Activated T-helper 2 cell treated with anti-CD3 and anti-CD28 coated beads, Interferon-gamma antibody, Interleukin-2, Interleukin-4, amounts not matched to agents 10 μg/mL and 5 μg/mL and 100 μg/mL, durations not matched to agents 14 hours and 24 hours and 36 hours (primary cell): ENCODE measurements at regions of chr15 and their contacts with region 1.

Region 1: GRCh38 chr15:85412956-85413854 is 32.8 kb downstream of the AKAP13 start:
- DNase-seq: peak; percentile 71
- H3K4me3 Mint-ChIP-seq: peak overlapping the region; percentile 55
- H3K27ac Mint-ChIP-seq: peak overlapping the region; percentile 87
- H3K4me1 Mint-ChIP-seq: peaks cover 64% of the 10 kb centered on the region
- H3K27me3 Mint-ChIP-seq: no peaks in the 10 kb centered on the region

Region 2: GRCh38 chr15:85296615-85297402 is 116.4 kb before region 1 on chr15:
- intact Hi-C with region 1: loop called (anchors 1 kb)
- DNase-seq: peak; percentile 65
- H3K4me3 Mint-ChIP-seq: peak overlapping the region; percentile 28
- H3K27ac Mint-ChIP-seq: peak overlapping the region; percentile 8
- H3K4me1 Mint-ChIP-seq: peaks cover 19% of the 10 kb centered on the region
- H3K27me3 Mint-ChIP-seq: peaks cover 7% of the 10 kb centered on the region

Region 3: GRCh38 chr15:85318048-85318731 is 95.0 kb before region 1 on chr15:
- intact Hi-C with region 1: loop called (anchors 1 kb)
- DNase-seq: peak; percentile 55
- H3K4me3 Mint-ChIP-seq: peak overlapping the region; percentile 41
- H3K27ac Mint-ChIP-seq: peak overlapping the region; percentile 91
- H3K4me1 Mint-ChIP-seq: peaks cover 66% of the 10 kb centered on the region
- H3K27me3 Mint-ChIP-seq: no peaks in the 10 kb centered on the region

Region 4: DNA sequence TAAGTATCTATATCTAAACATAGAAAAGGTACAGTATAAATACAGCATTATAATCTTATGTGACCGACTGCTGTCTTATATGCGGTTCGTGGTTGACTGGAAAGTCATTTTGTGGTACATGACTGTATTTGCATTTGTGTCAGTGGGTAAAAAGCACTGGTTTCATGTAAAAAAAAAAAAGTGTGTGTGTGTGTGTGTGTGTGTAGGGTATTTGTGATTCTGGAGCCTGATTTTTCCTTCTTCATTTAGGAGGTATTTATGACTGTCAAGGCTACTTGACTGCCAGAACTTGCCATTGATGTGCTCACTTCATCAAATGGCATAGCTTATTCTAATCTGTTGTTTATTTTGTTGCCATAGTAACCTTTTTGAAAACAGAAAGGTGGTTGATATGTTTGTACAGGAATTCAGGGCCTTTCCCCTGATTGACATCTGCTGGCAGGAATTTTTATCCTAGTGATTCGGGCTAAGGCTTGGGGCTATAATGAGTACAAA is 30.4 kb after region 1 on chr15:
- intact Hi-C with region 1: loop called (anchors 2 kb)
- DNase-seq: no peak
- H3K4me3 Mint-ChIP-seq: no peak overlapping the region
- H3K27ac Mint-ChIP-seq: peak overlapping the region; percentile 66
- H3K4me1 Mint-ChIP-seq: peaks cover 41% of the 10 kb centered on the region
- H3K27me3 Mint-ChIP-seq: no peaks in the 10 kb centered on the region

Region 5: GRCh38 chr15:85485956-85486567 is 72.9 kb after region 1 on chr15:
- intact Hi-C with region 1: no loop called
- DNase-seq: peak; percentile 40
- H3K4me3 Mint-ChIP-seq: no peak overlapping the region
- H3K27ac Mint-ChIP-seq: no peak overlapping the region
- H3K4me1 Mint-ChIP-seq: peaks cover 60% of the 10 kb centered on the region
- H3K27me3 Mint-ChIP-seq: no peaks in the 10 kb centered on the region

Region 6: DNA sequence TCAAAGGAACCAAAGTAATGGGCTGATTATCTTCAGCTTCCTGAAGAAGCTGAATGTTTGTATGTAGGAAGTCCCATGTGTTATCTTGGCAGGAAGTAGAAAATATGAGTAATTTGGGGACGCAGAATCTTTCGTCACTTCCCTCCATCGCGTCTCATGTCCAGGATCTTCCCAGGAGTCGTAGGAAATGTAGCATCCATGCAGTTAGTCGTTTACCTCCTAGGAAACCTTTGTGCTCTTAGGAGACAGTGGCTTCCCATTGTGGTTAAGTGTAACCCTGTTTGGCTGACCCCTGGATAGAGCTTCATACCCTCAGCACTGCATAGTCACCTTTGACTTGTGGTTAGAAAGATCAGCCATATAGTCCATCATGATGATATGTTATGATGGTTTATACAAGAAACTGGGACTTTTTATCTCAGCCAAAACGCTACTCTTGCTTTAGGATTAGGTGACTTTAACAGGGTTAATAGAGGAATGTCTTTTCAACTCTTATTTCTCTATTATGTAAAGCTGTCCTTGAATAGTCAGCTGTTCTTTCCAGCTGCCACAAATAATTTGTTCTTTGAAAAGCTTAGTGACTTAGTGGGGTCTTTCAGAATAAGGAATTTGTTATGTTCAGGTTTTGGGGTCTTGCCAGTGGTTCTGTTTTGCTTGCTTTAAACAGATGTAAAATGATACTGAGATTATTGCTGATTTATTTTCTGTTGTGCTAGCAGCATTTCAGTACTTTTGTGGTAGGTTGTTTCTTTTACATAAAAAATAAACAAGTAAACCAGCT is 289.3 kb after region 1 on chr15:
- intact Hi-C with region 1: loop called (anchors 5 kb)
- DNase-seq: peak; percentile 39
- H3K4me3 Mint-ChIP-seq: peak overlapping the region; percentile 77
- H3K27ac Mint-ChIP-seq: peak overlapping the region; percentile 99
- H3K4me1 Mint-ChIP-seq: peaks cover 51% of the 10 kb centered on the region
- H3K27me3 Mint-ChIP-seq: no peaks in the 10 kb centered on the region